ENCODE measurements at regions of chr20 and their contacts with region 1.

Region 1: GRCh38 chr20:11814267-11814666 is 103.4 kb upstream of the BTBD3 start:
- DNase-seq: no peak
- H3K4me3 Mint-ChIP-seq: no peak overlapping the region
- H3K27ac Mint-ChIP-seq: no peak overlapping the region
- H3K4me1 Mint-ChIP-seq: peaks cover 11% of the 10 kb centered on the region
- H3K27me3 Mint-ChIP-seq: no peaks in the 10 kb centered on the region
- CTCF ChIP-seq: no peak

Region 2: GRCh38 chr20:11401988-11402387 is 412.3 kb before region 1 on chr20:
- CTCF ChIA-PET with region 1: no interaction called
- POLR2A ChIA-PET with region 1: no interaction called
- intact Hi-C with region 1: no loop called
- DNase-seq: no peak
- H3K4me3 Mint-ChIP-seq: no peak overlapping the region
- H3K27ac Mint-ChIP-seq: no peak overlapping the region
- H3K4me1 Mint-ChIP-seq: no peaks in the 10 kb centered on the region
- H3K27me3 Mint-ChIP-seq: no peaks in the 10 kb centered on the region
- CTCF ChIP-seq: no peak

Region 3: GRCh38 chr20:11660673-11661072 is 153.6 kb before region 1 on chr20:
- CTCF ChIA-PET with region 1: no interaction called
- POLR2A ChIA-PET with region 1: no interaction called
- intact Hi-C with region 1: no loop called
- DNase-seq: no peak
- H3K4me3 Mint-ChIP-seq: no peak overlapping the region
- H3K27ac Mint-ChIP-seq: no peak overlapping the region
- H3K4me1 Mint-ChIP-seq: no peaks in the 10 kb centered on the region
- H3K27me3 Mint-ChIP-seq: no peaks in the 10 kb centered on the region
- CTCF ChIP-seq: no peak

Region 4: DNA sequence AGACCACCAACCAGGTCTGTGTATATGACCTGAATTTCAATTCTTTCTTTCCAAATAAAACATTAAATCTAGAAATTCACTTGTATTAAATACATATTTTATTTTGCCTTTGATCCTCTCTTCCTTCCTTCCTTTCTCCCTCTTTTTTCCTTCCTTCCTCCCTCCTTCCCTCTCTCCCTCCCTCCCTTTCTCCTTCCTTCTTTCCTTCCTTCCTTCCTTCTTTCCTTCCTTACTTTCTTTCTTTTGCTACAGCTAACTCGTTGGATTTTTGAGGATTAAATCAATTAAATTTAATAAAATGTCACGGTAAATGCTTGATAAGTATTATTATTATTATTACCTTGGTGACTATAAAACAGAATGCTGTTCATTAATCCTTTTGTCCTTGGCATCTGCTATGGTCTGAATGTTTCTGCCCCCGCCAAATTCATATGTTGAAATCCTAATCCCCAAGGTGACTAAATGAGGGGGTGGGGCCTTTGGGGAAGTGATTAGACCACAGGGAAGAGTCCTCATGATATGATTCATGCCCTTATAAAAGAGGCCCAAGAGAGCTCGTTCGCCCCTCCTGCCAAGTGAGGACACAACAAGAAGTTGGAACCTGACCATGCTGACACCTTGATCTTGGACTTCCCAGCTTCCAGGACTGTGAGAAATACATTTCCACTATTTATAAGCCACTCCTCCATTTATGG is 35.9 kb after region 1 on chr20:
- CTCF ChIA-PET with region 1: interaction called, 3 read pairs
- POLR2A ChIA-PET with region 1: interaction called, 10 read pairs
- intact Hi-C with region 1: no loop called
- DNase-seq: peak; percentile 98
- H3K4me3 Mint-ChIP-seq: peak overlapping the region; percentile 5
- H3K27ac Mint-ChIP-seq: peak overlapping the region; percentile 67
- H3K4me1 Mint-ChIP-seq: peaks cover 46% of the 10 kb centered on the region
- H3K27me3 Mint-ChIP-seq: no peaks in the 10 kb centered on the region
- CTCF ChIP-seq: no peak

Measured in MCF 10A (cell line).